ENCODE measurements at regions of chr2 and their contacts with region 1.

Region 1: GRCh38 chr2:216034065-216034464 is 20.7 kb upstream of the MREG start:
- DNase-seq: peak; percentile 51 to 62
- ATAC-seq: peak in 3 of 4 donors; percentile 49 to 70 (median 53)
- H3K4me3 ChIP-seq: no peak overlapping the region
- H3K27ac ChIP-seq: no peak overlapping the region
- H3K4me1 ChIP-seq: no peaks in the 10 kb centered on the region
- H3K27me3 ChIP-seq: no peaks in the 10 kb centered on the region
- CTCF ChIP-seq: peak; percentile 76

Region 2: GRCh38 chr2:215680605-215681598 is 353.2 kb before region 1 on chr2:
- intact Hi-C with region 1: no loop called
- DNase-seq: peak in 1 of 2 donors; percentile 30
- ATAC-seq: peak in 3 of 4 donors; percentile 34 to 49 (median 42)
- H3K4me3 ChIP-seq: no peak overlapping the region
- H3K27ac ChIP-seq: no peak overlapping the region
- H3K4me1 ChIP-seq: no peaks in the 10 kb centered on the region
- H3K27me3 ChIP-seq: no peaks in the 10 kb centered on the region
- CTCF ChIP-seq: no peak

Region 3: GRCh38 chr2:215736653-215737290 is 297.3 kb before region 1 on chr2:
- intact Hi-C with region 1: no loop called
- DNase-seq: no peak
- ATAC-seq: no peak
- H3K4me3 ChIP-seq: no peak overlapping the region
- H3K27ac ChIP-seq: no peak overlapping the region
- H3K4me1 ChIP-seq: no peaks in the 10 kb centered on the region
- H3K27me3 ChIP-seq: no peaks in the 10 kb centered on the region
- CTCF ChIP-seq: no peak

Region 4: DNA sequence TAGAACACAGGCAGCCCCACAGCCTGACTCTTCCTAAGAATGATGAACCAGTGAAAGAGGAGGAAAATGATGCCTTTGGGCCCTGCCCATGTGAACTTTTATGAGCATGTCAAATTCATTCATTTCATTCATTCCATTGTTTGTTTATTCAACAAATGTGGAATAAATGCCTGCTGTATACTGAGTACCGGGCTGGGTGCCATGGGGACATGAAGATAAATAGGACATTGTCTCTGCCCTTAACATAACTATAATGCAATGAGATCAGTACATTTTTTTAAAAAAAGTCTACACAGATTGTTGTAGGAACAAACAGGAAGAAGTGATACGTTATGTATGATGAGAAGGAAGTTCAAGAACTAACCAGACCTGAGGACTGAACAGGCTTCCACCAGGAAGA is 35.4 kb before region 1 on chr2:
- intact Hi-C with region 1: no loop called
- DNase-seq: no peak
- ATAC-seq: no peak
- H3K4me3 ChIP-seq: no peak overlapping the region
- H3K27ac ChIP-seq: no peak overlapping the region
- H3K4me1 ChIP-seq: no peaks in the 10 kb centered on the region
- H3K27me3 ChIP-seq: no peaks in the 10 kb centered on the region
- CTCF ChIP-seq: no peak

Region 5: GRCh38 chr2:216666461-216667233 is 632.6 kb after region 1 on chr2:
- intact Hi-C with region 1: loop called in 1 of 2 experiments (anchors 10 kb)
- DNase-seq: peak; percentile 52 to 77
- ATAC-seq: peak; percentile 70 to 84 (median 76)
- H3K4me3 ChIP-seq: no peak overlapping the region
- H3K27ac ChIP-seq: no peak overlapping the region
- H3K4me1 ChIP-seq: no peaks in the 10 kb centered on the region
- H3K27me3 ChIP-seq: no peaks in the 10 kb centered on the region
- CTCF ChIP-seq: peak; percentile 99

Measured in psoas muscle (tissue), 8 donors.